MCF 10A (cell line): ENCODE measurements at regions of chr5 and their contacts with region 1.

Region 1: GRCh38 chr5:140806834-140807775 is at the start of gene PCDHA4:
- DNase-seq: peak; percentile 18
- H3K4me3 Mint-ChIP-seq: peak within 1 kb of the TSS; percentile 55
- H3K27ac Mint-ChIP-seq: no peak within 1 kb of the TSS
- H3K4me1 Mint-ChIP-seq: no peaks in the 10 kb centered on the region
- H3K27me3 Mint-ChIP-seq: no peaks in the 10 kb centered on the region
- CTCF ChIP-seq: peak; percentile 38
- total RNA-seq, gene PCDHA4: 0.16 and 0.49 TPM in 2 replicates

Region 2: GRCh38 chr5:140785905-140786686 is 21.0 kb before region 1 on chr5 and contains the start of gene PCDHA1:
- CTCF ChIA-PET with region 1: interaction called, 13 read pairs
- POLR2A ChIA-PET with region 1: no interaction called
- intact Hi-C with region 1: no loop called
- DNase-seq: peak; percentile 51
- H3K4me3 Mint-ChIP-seq: peak within 1 kb of the TSS; percentile 42
- H3K27ac Mint-ChIP-seq: no peak within 1 kb of the TSS
- H3K4me1 Mint-ChIP-seq: no peaks in the 10 kb centered on the region
- H3K27me3 Mint-ChIP-seq: no peaks in the 10 kb centered on the region
- CTCF ChIP-seq: no peak
- total RNA-seq, gene PCDHA1: 0.07 TPM in 1 of 2 replicates, not detected in the other

Region 3: GRCh38 chr5:140821375-140822280 is 14.5 kb after region 1 on chr5 and contains the start of gene PCDHA5:
- CTCF ChIA-PET with region 1: interaction called, 30 read pairs
- POLR2A ChIA-PET with region 1: interaction called, 7 read pairs
- intact Hi-C with region 1: no loop called
- DNase-seq: peak; percentile 17
- H3K4me3 Mint-ChIP-seq: no peak within 1 kb of the TSS
- H3K27ac Mint-ChIP-seq: no peak within 1 kb of the TSS
- H3K4me1 Mint-ChIP-seq: no peaks in the 10 kb centered on the region
- H3K27me3 Mint-ChIP-seq: peaks cover 2% of the 10 kb centered on the region
- CTCF ChIP-seq: peak; percentile 19
- total RNA-seq, gene PCDHA5: 0.12 and 0.22 TPM in 2 replicates

Region 4: DNA sequence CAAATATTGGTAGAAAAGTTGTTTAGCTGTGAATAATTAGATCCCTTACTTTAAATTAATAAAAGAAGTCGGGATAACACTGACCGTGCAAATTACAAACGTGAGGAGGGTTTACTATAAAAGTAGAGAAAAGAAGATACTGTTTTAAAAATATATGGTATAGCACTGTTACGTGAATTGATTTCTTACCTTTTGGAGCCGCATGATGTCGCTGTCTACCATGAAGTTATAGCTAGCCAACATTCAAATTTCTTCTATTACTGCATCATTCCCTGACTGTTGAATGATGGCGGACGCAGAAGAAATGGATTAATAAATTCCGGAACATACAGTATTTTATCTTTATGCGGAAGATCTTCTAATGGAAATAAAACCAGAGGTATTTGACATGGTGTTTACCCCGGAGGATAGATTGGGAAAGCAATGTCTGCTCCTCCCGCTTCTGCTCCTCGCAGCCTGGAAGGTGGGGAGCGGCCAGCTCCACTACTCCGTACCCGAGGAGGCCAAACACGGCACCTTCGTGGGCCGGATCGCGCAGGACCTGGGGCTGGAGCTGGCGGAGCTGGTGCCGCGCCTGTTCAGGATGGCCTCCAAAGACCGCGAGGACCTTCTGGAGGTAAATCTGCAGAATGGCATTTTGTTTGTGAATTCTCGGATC is 20.7 kb after region 1 on chr5 and contains the start of gene PCDHA6:
- CTCF ChIA-PET with region 1: interaction called, 15 read pairs
- POLR2A ChIA-PET with region 1: interaction called, 8 read pairs
- intact Hi-C with region 1: no loop called
- DNase-seq: peak; percentile 48
- H3K4me3 Mint-ChIP-seq: peak within 1 kb of the TSS; percentile 81
- H3K27ac Mint-ChIP-seq: no peak within 1 kb of the TSS
- H3K4me1 Mint-ChIP-seq: no peaks in the 10 kb centered on the region
- H3K27me3 Mint-ChIP-seq: no peaks in the 10 kb centered on the region
- CTCF ChIP-seq: peak; percentile 37
- total RNA-seq, gene PCDHA6: 1.0 and 1.5 TPM in 2 replicates